CD8-positive, alpha-beta memory T cell (primary cell): ENCODE measurements at regions of chr7 and their contacts with region 1.

Region 1: GRCh38 chr7:36736090-36736898 is 12.0 kb upstream of the AOAH start:
- DNase-seq: no peak
- H3K4me3 ChIP-seq: peak overlapping the region; percentile 36
- H3K4me3 Mint-ChIP-seq: peak overlapping the region; percentile 6 to 89 (median 76)
- H3K27ac ChIP-seq: no peak overlapping the region
- H3K27ac Mint-ChIP-seq: peak overlapping the region; percentile 68 to 96 (median 92)
- H3K4me1 ChIP-seq: peaks cover 18% of the 10 kb centered on the region
- H3K4me1 Mint-ChIP-seq: peaks cover 36 to 47% (median 39%) of the 10 kb centered on the region in 3 donors
- H3K27me3 ChIP-seq: no peaks in the 10 kb centered on the region
- H3K27me3 Mint-ChIP-seq: peaks cover 0 to 1% of the 10 kb centered on the region in 2 donors

Region 2: DNA sequence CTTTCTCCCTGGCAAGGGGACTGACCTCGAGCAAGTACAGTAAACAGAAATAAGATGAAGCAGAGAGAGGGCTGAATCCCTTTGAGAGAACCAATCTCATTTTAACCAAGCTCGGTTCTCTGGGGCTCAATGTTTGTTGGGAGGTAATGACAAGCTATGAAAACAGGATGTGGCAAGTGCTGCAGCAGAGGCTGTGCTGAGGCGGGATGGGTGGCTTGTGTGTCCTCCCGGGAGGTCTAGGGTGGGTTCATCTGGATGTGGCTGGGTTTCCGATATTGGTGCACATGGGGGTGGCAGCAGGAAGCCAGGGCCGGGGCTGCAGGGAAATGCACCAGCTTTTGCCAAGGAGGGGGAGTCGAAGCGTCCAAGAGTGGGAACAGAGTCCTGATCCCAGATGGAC is 96.5 kb before region 1 on chr7:
- CTCF ChIA-PET with region 1: no interaction called
- POLR2A ChIA-PET with region 1: no interaction called
- DNase-seq: peak; percentile 18 to 78 (median 62)
- H3K4me3 ChIP-seq: peak overlapping the region; percentile 21
- H3K4me3 Mint-ChIP-seq: peak overlapping the region in 6 of 7 donors; percentile 57 to 82 (median 78)
- H3K27ac ChIP-seq: peak overlapping the region; percentile 29
- H3K27ac Mint-ChIP-seq: peak overlapping the region; percentile 53 to 99 (median 90)
- H3K4me1 ChIP-seq: peaks cover 64% of the 10 kb centered on the region
- H3K4me1 Mint-ChIP-seq: peaks cover 78 to 98% (median 95%) of the 10 kb centered on the region in 3 donors
- H3K27me3 ChIP-seq: no peaks in the 10 kb centered on the region
- H3K27me3 Mint-ChIP-seq: no peaks in the 10 kb centered on the region

Region 3: GRCh38 chr7:36708767-36709166 is 27.5 kb before region 1 on chr7:
- CTCF ChIA-PET with region 1: no interaction called
- POLR2A ChIA-PET with region 1: no interaction called
- DNase-seq: no peak
- H3K4me3 ChIP-seq: no peak overlapping the region
- H3K4me3 Mint-ChIP-seq: peak overlapping the region in 6 of 7 donors; percentile 42 to 68 (median 64)
- H3K27ac ChIP-seq: no peak overlapping the region
- H3K27ac Mint-ChIP-seq: peak overlapping the region in 7 of 8 donors; percentile 45 to 81 (median 72)
- H3K4me1 ChIP-seq: no peaks in the 10 kb centered on the region
- H3K4me1 Mint-ChIP-seq: peaks cover 62 to 90% (median 84%) of the 10 kb centered on the region in 3 donors
- H3K27me3 ChIP-seq: no peaks in the 10 kb centered on the region
- H3K27me3 Mint-ChIP-seq: no peaks in the 10 kb centered on the region

Region 4: DNA sequence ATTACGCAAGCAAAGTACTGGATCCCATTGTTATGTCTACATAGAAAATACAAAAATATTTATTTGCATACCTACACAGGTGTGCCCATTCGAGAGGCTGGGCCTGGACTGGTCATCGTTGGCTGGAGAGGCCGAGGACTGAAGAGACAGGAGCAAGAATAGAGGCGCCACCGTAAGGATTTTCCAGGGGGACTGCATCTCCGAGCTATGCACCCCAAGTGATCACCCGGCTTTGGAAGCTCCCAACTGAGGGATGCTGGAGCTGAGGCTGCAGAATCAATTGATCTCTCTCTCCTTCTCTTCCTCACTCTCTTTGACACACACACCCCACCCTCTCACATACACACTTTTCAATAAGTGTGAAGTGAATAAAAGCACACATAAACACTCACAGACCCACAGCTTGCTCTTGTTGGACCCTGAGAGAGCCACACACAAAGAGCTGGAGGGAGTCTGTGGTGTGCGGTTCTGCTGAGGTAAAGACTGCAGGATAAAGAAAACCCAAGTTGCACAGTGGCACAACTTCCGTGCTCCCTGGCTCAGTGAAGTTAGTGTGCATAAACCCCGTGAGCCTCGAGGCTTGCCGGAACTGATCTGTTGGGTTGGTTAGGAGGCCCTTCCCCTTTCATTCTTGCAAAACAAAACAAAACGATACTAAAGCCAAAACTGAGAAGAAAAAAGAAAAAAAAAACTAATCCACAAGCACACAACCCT is 12.2 kb before region 1 on chr7 and contains the start of gene AOAH:
- CTCF ChIA-PET with region 1: interaction called, 11 read pairs
- POLR2A ChIA-PET with region 1: interaction called, 4 read pairs
- DNase-seq: peak; percentile 56 to 90 (median 88)
- H3K4me3 ChIP-seq: peak within 1 kb of the TSS; percentile 69
- H3K4me3 Mint-ChIP-seq: peak within 1 kb of the TSS; percentile 86 to 95 (median 91)
- H3K27ac ChIP-seq: peak within 1 kb of the TSS; percentile 26
- H3K27ac Mint-ChIP-seq: peak within 1 kb of the TSS; percentile 73 to 98 (median 94)
- H3K4me1 ChIP-seq: peaks cover 75% of the 10 kb centered on the region
- H3K4me1 Mint-ChIP-seq: peaks cover 86 to 95% (median 94%) of the 10 kb centered on the region in 3 donors
- H3K27me3 ChIP-seq: no peaks in the 10 kb centered on the region
- H3K27me3 Mint-ChIP-seq: no peaks in the 10 kb centered on the region
- total RNA-seq, gene AOAH: 25.0 to 26.4 TPM